ENCODE measurements at regions of chr5 and their contacts with region 1.

Region 1: DNA sequence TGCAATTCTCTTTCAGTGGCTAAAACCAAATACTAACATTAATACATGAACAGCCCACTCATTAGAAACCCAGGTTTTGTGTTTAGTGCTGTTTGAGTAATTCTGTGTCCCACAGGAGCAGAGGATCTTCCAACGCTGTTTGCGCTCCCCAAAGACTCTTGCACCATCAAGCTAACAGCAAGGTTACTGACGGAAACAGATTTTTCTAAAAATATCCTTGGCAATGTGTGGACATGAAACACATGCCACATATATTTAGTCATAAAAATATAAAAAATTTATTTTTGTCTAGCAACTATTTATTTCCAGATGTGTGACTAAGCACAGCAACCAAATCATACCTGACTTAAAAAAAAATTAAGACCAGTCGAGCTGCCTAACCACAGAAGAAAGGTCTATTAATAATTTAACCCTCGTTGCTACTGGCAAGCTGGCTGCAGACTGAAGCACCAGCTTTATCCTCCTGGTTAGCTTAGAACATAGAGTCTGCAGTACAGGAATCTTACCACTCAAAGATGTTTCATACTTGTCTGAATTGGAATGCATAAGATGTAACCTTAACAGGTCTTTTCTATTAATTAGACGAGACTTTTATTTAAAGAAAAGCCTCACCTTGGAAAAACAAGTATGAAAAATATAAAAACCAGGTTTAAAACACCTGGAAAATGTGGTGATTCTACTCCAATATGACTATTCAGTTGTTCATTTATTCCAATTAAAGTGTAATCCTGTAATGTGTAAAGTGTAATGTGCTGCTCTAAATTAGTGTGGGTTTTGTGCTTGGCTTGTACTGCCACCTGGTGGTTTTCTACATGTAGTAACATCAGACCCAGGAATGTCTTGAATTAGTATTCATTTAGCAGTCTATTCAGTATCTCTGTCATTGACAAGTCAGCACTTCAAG is 272.5 kb downstream of the EPB41L4A start:
- H3K4me3 Mint-ChIP-seq: no peak overlapping the region
- H3K27ac Mint-ChIP-seq: no peak overlapping the region
- H3K4me1 Mint-ChIP-seq: peaks cover 14% of the 10 kb centered on the region
- H3K27me3 Mint-ChIP-seq: peaks cover 2% of the 10 kb centered on the region

Region 2: GRCh38 chr5:111158105-111158744 is 988.4 kb before region 1 on chr5:
- intact Hi-C with region 1: loop called (anchors 1 kb)
- H3K4me3 Mint-ChIP-seq: no peak overlapping the region
- H3K27ac Mint-ChIP-seq: no peak overlapping the region
- H3K4me1 Mint-ChIP-seq: no peaks in the 10 kb centered on the region
- H3K27me3 Mint-ChIP-seq: peaks cover 2% of the 10 kb centered on the region

Region 3: DNA sequence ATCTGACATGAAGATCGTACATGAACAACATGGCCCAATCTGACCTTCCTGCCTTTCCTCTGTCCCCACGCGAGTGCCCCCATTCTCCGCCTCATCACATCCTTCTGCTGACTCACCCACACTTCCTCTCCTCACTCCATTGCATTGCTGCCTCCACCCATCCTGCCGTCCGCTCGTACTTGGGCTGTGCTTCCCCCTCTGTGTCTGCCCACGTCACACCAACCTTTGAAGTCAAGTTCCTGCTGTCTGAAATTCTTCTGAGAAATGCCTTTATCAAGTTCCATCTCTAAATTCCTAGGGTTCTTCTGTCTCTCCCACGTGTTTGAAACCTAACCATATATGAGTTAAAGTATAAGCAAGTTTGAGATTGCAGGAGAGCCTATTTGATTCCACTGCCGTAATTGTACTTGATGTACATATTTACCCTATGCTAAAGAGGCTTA is 616.3 kb before region 1 on chr5:
- intact Hi-C with region 1: loop called (anchors 5 kb)
- H3K4me3 Mint-ChIP-seq: peak overlapping the region; percentile 18
- H3K27ac Mint-ChIP-seq: peak overlapping the region; percentile 82
- H3K4me1 Mint-ChIP-seq: peaks cover 18% of the 10 kb centered on the region
- H3K27me3 Mint-ChIP-seq: no peaks in the 10 kb centered on the region

Region 4: DNA sequence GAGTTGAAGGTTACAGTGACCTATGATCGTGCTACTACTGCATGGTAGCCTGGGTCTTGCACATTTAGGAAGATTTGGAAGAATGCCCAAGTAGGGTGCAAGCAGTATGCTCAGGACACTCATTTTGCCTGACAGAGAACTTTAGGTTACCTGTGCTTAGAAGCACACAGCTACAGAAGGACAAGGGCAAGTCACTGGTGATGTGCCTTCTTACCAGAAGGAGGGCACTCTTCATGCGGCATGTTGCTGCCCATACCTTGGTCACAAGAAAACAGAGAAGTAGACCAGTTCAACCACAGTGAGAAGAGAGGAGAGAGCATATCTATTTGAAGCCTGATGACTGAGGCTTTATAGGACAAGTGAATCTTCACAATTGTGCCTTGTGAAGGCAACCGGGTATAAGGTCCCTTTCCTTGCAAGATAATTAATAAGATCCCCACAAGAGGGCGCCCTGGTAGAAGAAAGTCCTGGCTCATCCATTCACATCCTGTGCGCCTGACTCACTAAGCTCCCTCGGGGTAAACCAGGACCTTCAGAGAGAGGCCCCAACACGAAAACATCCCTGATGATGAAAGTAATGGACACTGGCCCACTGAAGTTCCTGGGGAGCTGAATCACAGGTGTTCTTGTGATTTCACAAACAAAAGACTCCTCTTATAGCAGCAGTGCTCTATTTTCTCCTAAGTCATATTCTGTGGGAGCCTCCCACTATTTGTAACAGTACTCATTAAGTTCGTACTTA is 596.1 kb before region 1 on chr5:
- intact Hi-C with region 1: loop called (anchors 1 kb)
- H3K4me3 Mint-ChIP-seq: no peak overlapping the region
- H3K27ac Mint-ChIP-seq: no peak overlapping the region
- H3K4me1 Mint-ChIP-seq: peaks cover 27% of the 10 kb centered on the region
- H3K27me3 Mint-ChIP-seq: no peaks in the 10 kb centered on the region

Region 5: DNA sequence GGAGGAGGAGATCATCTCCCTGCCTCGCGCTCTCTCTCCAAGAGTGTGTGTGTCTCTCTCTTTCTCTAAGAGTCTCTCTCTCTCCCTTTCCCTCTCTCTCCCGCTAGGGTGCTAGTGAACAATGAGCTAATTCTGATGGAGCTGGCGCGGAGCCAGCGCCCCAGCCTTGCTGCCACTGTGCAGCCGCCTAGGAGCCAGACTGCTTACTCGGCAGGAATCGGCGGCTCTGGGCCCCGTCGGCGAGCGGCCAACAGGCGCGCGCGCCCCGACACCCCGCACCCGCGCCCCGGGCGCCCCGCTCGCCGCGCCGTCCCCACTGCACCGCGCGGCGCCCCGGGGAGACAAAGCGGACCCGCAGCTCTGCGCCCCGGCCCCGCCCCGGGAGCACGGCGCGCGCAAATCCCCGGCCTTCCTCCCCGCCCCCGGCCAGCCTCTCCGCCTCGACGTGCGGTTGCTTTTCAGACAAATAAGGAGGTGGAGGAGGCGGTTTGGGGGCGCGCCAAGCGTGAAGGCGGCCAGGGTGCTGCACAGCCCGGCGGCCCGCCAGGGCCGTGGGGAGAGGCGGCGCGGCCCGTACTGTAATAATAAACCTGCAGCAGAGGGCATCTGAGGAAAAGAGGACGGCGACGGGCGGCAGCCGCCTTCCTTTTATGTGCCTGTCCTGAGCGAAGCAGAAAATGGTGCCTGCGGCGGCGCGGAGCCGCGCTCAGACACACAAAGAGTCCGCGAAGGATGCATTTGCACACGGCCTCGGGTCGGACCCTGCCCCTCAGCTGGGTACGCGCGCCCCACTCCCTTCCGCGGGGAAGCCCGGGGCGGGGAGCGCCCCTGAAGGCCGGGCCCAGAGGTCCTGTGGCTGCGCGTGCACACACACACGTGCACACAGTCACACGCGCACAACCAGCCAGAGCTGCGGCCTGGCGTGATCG is 389.0 kb before region 1 on chr5:
- intact Hi-C with region 1: loop called (anchors 5 kb)
- H3K4me3 Mint-ChIP-seq: peak overlapping the region; percentile 84
- H3K27ac Mint-ChIP-seq: peak overlapping the region; percentile 84
- H3K4me1 Mint-ChIP-seq: peaks cover 44% of the 10 kb centered on the region
- H3K27me3 Mint-ChIP-seq: peaks cover 21% of the 10 kb centered on the region

Region 6: GRCh38 chr5:113081881-113082546 is 935.4 kb after region 1 on chr5:
- intact Hi-C with region 1: no loop called
- H3K4me3 Mint-ChIP-seq: no peak overlapping the region
- H3K27ac Mint-ChIP-seq: no peak overlapping the region
- H3K4me1 Mint-ChIP-seq: no peaks in the 10 kb centered on the region
- H3K27me3 Mint-ChIP-seq: peaks cover 6% of the 10 kb centered on the region